Prostate gland (tissue), 2 donors: ENCODE measurements at regions of chr15 and their contacts with region 1.

Region 1: DNA sequence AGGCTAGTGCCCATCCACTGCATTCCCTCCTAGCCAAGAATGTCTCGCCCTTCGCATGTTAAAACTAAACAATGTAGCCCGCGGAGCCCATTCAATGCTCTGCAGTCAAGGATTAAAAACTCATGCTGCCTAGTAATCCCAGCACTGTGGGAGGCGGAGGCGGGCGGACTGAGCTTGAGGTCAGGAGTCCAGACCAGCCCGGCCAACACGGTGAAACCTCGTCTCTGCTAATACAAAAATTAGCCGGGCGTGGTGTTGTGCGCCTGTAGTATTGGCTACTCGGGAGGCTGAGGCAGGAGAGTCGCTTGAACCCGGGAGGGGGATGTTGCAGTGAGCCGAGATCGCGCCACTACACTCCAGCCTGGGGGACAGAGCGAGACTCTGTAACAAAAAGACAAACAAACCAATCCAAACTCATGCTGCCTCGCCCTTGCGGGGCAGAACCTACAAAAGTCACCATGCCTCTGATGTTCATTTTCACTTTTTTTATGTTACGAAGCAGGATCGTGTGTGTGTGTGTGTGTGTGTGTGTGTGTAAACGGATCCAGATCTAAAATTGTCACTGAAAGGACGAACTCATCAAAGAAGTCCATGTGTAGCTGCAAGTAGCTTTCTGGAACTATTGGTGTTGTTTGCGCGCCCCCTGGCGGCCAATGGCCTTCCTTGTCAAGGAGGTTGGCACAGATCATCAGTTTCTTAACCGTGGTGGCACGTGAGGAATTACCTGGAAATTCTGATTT is 54.8 kb upstream of the SPESP1 start:
- DNase-seq: peak; percentile 93
- H3K4me3 ChIP-seq: peak overlapping the region; percentile 8 to 21
- H3K27ac ChIP-seq: no peak overlapping the region
- H3K4me1 ChIP-seq: no peaks in the 10 kb centered on the region
- H3K27me3 ChIP-seq: no peaks in the 10 kb centered on the region
- CTCF ChIP-seq: peak; percentile 79 to 94 (median 94)
- POLR2A ChIP-seq: no peak

Region 2: DNA sequence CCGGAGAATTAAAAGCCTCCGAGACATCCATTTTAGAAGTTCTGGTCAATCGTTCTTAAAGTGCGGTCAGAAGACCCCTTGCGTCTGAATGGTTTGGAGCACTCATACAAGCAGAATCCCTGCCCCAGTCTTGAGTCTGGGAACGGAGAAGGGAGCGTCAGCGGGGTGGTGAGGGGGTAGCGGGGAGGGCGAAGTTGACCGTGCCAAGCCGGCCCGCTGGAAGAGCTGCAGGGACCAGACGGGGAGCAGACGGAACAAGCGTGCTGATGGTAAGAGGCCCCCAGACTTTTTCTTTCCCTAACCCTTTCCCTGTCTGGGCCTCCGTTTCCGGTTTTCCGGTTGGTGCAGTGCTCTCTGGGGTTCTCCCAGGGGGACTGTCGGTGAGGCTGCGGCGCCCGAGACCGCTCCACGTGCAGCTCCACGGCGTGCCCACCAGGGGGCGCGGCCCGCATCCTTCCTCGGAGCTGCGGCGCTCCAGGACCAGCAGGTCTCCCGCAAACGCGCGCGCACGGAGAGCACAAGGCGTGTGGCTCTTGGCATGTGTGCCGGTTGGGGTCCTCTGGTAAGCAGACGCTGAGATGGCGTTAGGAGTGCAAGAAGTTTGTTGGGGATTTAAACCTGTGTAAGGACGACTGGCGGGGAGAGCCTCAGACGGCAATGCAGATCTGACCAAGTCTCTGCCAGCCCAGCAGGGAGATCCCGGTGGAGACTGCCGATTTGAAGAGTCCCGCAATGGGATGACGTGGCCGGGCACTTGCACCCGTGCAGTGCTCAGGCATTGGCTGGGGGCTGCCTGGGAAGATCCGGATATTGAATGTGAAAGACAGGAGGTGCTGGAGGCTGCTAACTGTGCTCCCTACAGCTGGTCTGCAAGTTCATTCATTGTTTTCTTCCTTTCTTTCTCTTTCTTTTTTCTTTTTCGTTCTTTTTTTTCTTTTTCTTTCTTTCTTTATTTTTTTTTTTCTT is 315.9 kb before region 1 on chr15:
- intact Hi-C with region 1: loop called (anchors 5 kb)
- DNase-seq: peak; percentile 47
- H3K4me3 ChIP-seq: peak overlapping the region; percentile 15 to 25
- H3K27ac ChIP-seq: no peak overlapping the region
- H3K4me1 ChIP-seq: no peaks in the 10 kb centered on the region
- H3K27me3 ChIP-seq: no peaks in the 10 kb centered on the region
- CTCF ChIP-seq: peak; percentile 90 to 97 (median 92)
- POLR2A ChIP-seq: no peak

Region 3: GRCh38 chr15:68730471-68730919 is 145.1 kb before region 1 on chr15:
- intact Hi-C with region 1: loop called (anchors 2 kb)
- DNase-seq: peak; percentile 29
- H3K4me3 ChIP-seq: no peak overlapping the region
- H3K27ac ChIP-seq: peak overlapping the region in 1 of 2 donors; percentile 8
- H3K4me1 ChIP-seq: no peaks in the 10 kb centered on the region
- H3K27me3 ChIP-seq: no peaks in the 10 kb centered on the region
- CTCF ChIP-seq: peak in 3 of 4 experiments; percentile 58 to 72 (median 62)
- POLR2A ChIP-seq: no peak

Region 4: DNA sequence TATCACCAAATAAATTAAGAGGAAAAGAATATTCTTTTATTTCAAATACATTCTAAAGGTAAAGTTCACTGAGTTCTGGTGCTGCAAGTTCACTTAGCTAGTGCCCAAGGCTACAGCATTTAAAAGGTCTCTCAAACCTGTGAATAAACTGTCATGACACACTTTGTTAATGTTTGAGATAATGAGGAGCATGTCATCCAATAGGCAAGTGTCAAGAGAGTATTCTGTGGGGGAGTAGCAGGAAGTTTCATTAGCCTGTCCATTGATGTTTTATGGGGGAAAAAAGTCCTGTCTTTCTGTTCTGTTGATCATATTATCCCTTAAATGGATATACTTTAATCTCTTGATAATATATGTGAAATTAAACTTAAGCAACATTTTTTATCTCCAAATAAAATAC is 58.8 kb after region 1 on chr15:
- intact Hi-C with region 1: no loop called
- DNase-seq: no peak
- H3K4me3 ChIP-seq: no peak overlapping the region
- H3K27ac ChIP-seq: no peak overlapping the region
- H3K4me1 ChIP-seq: no peaks in the 10 kb centered on the region
- H3K27me3 ChIP-seq: no peaks in the 10 kb centered on the region
- CTCF ChIP-seq: no peak
- POLR2A ChIP-seq: no peak